Psoas muscle (tissue), 8 donors: ENCODE measurements at regions of chrX and their contacts with region 1.

Region 1: DNA sequence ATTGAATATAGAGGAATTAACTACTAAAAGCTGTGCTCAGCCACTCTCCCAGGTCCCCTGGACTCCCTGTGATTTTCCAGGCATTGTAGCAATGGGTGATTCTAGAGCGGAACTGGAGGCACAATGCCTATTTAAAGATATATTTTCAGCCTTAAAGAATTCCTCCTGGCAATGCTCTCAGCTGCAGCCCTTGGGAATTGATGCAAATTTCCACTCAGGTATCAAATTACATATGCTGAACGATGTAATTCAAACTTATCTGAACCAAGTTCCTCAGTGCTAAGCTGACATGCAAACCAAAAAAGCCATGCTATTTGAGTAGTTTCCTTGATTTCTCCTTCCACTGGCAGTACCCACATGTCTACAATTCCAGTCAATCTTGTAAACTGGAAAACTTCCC is 86.3 kb upstream of the GABRA3 start:
- DNase-seq: no peak
- ATAC-seq: no peak
- H3K4me3 ChIP-seq: no peak overlapping the region
- H3K27ac ChIP-seq: no peak overlapping the region
- H3K4me1 ChIP-seq: no peaks in the 10 kb centered on the region
- H3K27me3 ChIP-seq: peaks cover 0 to 6% (median 0%) of the 10 kb centered on the region in 3 donors
- CTCF ChIP-seq: no peak

Region 2: DNA sequence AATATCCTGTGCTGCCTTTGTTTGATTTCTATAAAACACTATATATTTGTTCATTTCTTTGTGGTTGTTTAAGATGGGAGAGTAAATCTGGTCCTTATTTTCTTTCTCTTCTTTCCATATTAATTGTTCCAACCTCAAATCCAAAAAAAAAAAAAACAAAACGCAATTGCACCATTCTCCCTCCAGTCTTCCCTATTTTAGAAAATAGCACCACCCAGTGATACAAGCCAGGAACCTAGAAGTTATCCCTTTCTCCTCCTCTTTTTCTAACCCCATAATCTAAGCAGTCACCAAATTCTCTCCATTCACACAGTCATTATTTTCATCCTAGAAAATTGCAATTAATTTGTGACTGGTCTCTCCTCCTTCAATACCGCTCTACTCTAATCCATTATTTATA is 194.1 kb before region 1 on chrX:
- intact Hi-C with region 1: loop called in 1 of 2 experiments (anchors 10 kb)
- DNase-seq: no peak
- ATAC-seq: no peak
- H3K4me3 ChIP-seq: no peak overlapping the region
- H3K27ac ChIP-seq: no peak overlapping the region
- H3K4me1 ChIP-seq: no peaks in the 10 kb centered on the region
- H3K27me3 ChIP-seq: no peaks in the 10 kb centered on the region
- CTCF ChIP-seq: no peak